Transverse colon (tissue), 4 donors: ENCODE measurements at regions of chr13 and their contacts with region 1.

Region 1: DNA sequence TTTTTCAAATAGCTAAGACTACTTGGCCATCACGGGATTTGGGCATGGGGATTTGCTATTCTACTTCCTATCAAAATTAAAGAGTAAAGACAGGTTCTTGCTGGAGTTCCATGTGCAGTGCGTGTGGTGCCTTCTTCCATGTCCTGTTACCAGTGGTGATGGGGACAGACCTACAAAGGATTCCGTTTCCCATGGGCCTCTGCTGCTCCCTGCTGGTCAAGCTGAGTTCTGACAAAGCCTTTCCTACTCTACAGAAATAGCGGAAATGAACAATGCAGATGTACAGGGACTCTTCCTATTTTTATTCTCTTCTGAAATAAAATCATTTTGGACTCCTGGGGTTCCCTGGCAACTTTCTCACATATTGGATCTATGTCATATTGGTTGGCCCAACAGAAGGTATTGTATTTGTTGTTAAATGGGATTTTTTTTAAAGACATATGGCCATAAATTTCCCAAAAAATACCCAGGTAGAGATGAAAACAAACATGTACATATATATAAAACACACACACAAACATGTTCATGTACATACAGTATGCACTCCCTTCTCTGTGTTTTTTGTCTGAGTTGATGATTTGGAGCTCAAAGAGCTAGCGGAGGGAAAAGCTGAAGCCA is 90.5 kb upstream of the SLC15A1 start:
- DNase-seq: peak; percentile 73
- H3K4me3 ChIP-seq: no peak overlapping the region
- H3K27ac ChIP-seq: no peak overlapping the region
- H3K4me1 ChIP-seq: no peaks in the 10 kb centered on the region
- H3K27me3 ChIP-seq: no peaks in the 10 kb centered on the region
- CTCF ChIP-seq: peak; percentile 77 to 85 (median 80)
- EP300 ChIP-seq: no peak
- POLR2A ChIP-seq: no peak

Region 2: GRCh38 chr13:98466634-98467236 is 376.2 kb before region 1 on chr13:
- in situ Hi-C with region 1: loop called in 1 of 4 experiments (anchors 25 kb)
- intact Hi-C with region 1: no loop called
- DNase-seq: peak; percentile 59
- H3K4me3 ChIP-seq: no peak overlapping the region
- H3K27ac ChIP-seq: peak overlapping the region in 3 of 4 donors; percentile 0 to 33 (median 6)
- H3K4me1 ChIP-seq: peaks cover 0 to 8% (median 4%) of the 10 kb centered on the region in 4 donors
- H3K27me3 ChIP-seq: no peaks in the 10 kb centered on the region
- CTCF ChIP-seq: peak; percentile 51 to 62 (median 55)
- EP300 ChIP-seq: no peak
- POLR2A ChIP-seq: no peak